ENCODE measurements at regions of chr10 and their contacts with region 1.

Region 1: GRCh38 chr10:119199231-119199992 is 8.0 kb upstream of the GRK5 start:
- DNase-seq: peak; percentile 89
- ATAC-seq: peak; percentile 85
- H3K4me3 ChIP-seq: no peak overlapping the region
- H3K27ac ChIP-seq: no peak overlapping the region
- H3K4me1 ChIP-seq: peaks cover 11% of the 10 kb centered on the region
- H3K27me3 ChIP-seq: no peaks in the 10 kb centered on the region
- CTCF ChIP-seq: peak; percentile 92
- POLR2A ChIP-seq: no peak; the same call in 1 of the 2 replicates
- RAD21 ChIP-seq: peak; percentile 95

Region 2: DNA sequence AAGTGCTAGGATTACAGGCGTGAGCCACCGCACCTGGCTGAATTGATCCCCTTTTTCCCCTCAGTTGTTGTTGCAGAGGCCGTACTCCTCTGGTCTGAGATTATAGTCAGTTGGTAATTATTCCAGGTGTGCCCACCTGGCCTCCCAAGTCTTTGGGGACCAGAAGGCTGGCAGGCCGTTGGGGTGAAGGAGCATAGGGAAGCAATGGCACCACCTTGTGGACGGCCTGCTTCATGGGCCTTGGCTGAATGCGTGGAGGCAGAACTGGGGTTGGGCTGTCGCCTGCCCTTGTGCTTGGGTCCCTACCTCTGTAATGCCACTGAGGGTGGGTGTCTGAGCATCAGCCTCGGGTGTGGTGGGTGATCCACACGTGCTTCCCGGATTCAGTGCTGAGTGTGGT is 217.4 kb after region 1 on chr10:
- CTCF ChIA-PET with region 1: interaction called, 8 read pairs
- POLR2A ChIA-PET with region 1: no interaction called
- dilution Hi-C with region 1: no loop called
- in situ Hi-C with region 1: no loop called
- intact Hi-C with region 1: loop called (anchors 2 kb)
- DNase-seq: peak; percentile 60
- ATAC-seq: no peak
- H3K4me3 ChIP-seq: no peak overlapping the region
- H3K27ac ChIP-seq: 0 out of 2 replicates have a peak overlapping the region, but pooled peaks have one; percentile 2
- H3K4me1 ChIP-seq: peaks cover 36% of the 10 kb centered on the region
- H3K27me3 ChIP-seq: no peaks in the 10 kb centered on the region
- CTCF ChIP-seq: peak; percentile 77
- POLR2A ChIP-seq: peak; percentile 49; the same call in 1 of the 2 replicates
- RAD21 ChIP-seq: peak; percentile 91

Region 3: DNA sequence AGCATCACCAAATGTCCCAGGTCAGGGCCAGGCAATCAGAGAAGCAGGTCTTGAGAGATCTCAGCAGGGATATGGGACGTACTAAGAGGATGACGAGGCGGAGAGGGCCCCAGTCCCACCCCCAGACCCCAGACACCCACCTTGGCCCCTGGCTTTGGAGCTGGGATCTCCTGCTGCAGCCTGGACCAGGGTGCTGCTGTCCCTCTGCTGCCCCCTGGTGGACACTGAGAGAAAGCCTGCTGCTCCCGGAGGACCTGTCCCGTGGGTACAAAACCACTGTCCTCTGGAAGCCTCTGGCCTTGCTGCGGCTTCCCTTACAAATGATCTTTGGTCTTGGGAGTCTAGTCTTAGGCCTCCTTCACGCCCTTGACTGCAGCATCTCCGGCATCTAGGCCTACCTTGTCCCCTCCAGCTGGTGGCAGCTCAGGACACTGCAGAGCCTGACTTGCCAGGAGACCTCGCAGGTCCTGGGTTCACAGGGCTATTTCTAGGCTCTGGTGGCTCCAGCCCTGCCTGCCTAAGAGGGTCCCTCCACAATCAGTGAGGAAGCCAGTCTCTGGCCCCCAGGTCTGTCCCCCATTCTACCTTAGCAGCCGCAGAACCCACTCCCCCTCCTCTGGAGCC is 246.0 kb after region 1 on chr10:
- CTCF ChIA-PET with region 1: interaction called, 31 read pairs
- POLR2A ChIA-PET with region 1: no interaction called
- dilution Hi-C with region 1: no loop called
- in situ Hi-C with region 1: loop called (anchors 5 kb)
- intact Hi-C with region 1: loop called (anchors 1 kb)
- DNase-seq: peak; percentile 74
- ATAC-seq: peak; percentile 74
- H3K4me3 ChIP-seq: no peak overlapping the region
- H3K27ac ChIP-seq: no peak overlapping the region
- H3K4me1 ChIP-seq: peaks cover 9% of the 10 kb centered on the region; the same call in 1 of the 2 replicates
- H3K27me3 ChIP-seq: no peaks in the 10 kb centered on the region
- CTCF ChIP-seq: peak; percentile 86
- POLR2A ChIP-seq: no peak
- RAD21 ChIP-seq: peak; percentile 86

Region 4: GRCh38 chr10:119494236-119495060 is 295.0 kb after region 1 on chr10:
- CTCF ChIA-PET with region 1: interaction called, 10 read pairs
- POLR2A ChIA-PET with region 1: no interaction called
- dilution Hi-C with region 1: no loop called
- in situ Hi-C with region 1: no loop called
- intact Hi-C with region 1: no loop called
- DNase-seq: peak; percentile 76
- ATAC-seq: peak; percentile 46
- H3K4me3 ChIP-seq: no peak overlapping the region
- H3K27ac ChIP-seq: peak overlapping the region; percentile 94
- H3K4me1 ChIP-seq: peaks cover 30% of the 10 kb centered on the region
- H3K27me3 ChIP-seq: no peaks in the 10 kb centered on the region
- CTCF ChIP-seq: no peak
- POLR2A ChIP-seq: no peak
- RAD21 ChIP-seq: no peak

Region 5: DNA sequence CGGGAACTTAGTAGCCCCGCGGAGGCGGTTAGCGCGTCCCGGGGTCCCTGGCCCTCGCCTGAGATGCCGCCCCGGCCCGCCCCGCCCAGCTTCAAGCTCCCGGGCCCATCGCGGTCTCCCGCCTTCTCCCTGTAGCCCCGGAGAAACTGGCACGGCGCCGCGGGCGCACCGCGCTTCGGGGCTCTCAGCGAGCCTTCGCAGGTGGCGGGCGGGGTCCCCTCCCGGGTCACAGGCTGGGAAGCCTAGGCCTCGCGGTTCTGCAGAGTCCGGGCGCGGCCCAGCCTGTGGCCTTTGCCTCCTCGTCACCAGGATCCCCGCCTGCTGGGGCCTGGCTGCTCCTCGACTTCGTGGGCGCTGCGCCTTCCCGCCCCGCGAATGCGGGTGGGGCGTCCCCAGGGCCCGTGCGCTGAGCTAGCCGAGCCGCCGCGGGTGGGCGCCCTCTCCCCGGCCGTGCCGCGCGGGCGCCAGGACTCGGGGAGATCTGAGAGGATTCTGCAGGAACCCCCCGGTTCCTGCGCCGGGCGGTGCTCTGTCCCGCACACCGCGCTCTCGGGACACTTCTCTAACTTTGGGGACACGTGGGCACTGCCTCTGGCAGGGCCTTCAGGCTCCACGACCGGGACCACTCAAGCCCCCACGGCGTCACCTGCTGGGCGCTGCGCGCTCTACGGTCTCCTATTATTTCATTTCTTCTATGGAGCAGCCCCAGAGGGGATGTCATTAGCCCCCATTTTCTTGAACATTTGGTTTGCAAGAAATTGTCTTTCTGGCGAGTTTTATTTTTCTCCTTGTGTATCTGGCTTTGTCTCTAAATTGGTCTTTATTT is 343.8 kb after region 1 on chr10:
- CTCF ChIA-PET with region 1: interaction called, 8 read pairs
- POLR2A ChIA-PET with region 1: no interaction called
- dilution Hi-C with region 1: no loop called
- in situ Hi-C with region 1: no loop called
- intact Hi-C with region 1: loop called (anchors 1 kb)
- DNase-seq: peak; percentile 49
- ATAC-seq: peak; percentile 58
- H3K4me3 ChIP-seq: peak overlapping the region; percentile 81
- H3K27ac ChIP-seq: peak overlapping the region; percentile 43
- H3K4me1 ChIP-seq: peaks cover 20% of the 10 kb centered on the region
- H3K27me3 ChIP-seq: no peaks in the 10 kb centered on the region; the same call in 1 of the 2 replicates
- CTCF ChIP-seq: peak; percentile 56
- POLR2A ChIP-seq: no peak; the same call in 1 of the 2 replicates
- RAD21 ChIP-seq: peak; percentile 54

Region 6: GRCh38 chr10:119596537-119597404 is 397.4 kb after region 1 on chr10 and contains the start of gene TIAL1:
- CTCF ChIA-PET with region 1: interaction called, 8 read pairs
- POLR2A ChIA-PET with region 1: no interaction called
- dilution Hi-C with region 1: no loop called
- in situ Hi-C with region 1: no loop called
- intact Hi-C with region 1: loop called (anchors 2 kb)
- DNase-seq: peak; percentile 99
- ATAC-seq: peak; percentile 87
- H3K4me3 ChIP-seq: peak within 1 kb of the TSS; percentile 78
- H3K27ac ChIP-seq: peak within 1 kb of the TSS; percentile 96
- H3K4me1 ChIP-seq: peaks cover 5% of the 10 kb centered on the region; the same call in 1 of the 2 replicates
- H3K27me3 ChIP-seq: no peaks in the 10 kb centered on the region
- CTCF ChIP-seq: no peak
- POLR2A ChIP-seq: peak; percentile 71
- RAD21 ChIP-seq: no peak
- total RNA-seq, gene TIAL1: 28.0 and 44.2 TPM in 2 replicates

Region 7: GRCh38 chr10:119650692-119651513 is 451.5 kb after region 1 on chr10 and contains the start of gene BAG3:
- CTCF ChIA-PET with region 1: interaction called, 3 read pairs
- POLR2A ChIA-PET with region 1: no interaction called
- dilution Hi-C with region 1: no loop called
- in situ Hi-C with region 1: no loop called
- intact Hi-C with region 1: loop called (anchors 5 kb)
- DNase-seq: peak; percentile 92
- ATAC-seq: peak; percentile 87
- H3K4me3 ChIP-seq: peak within 1 kb of the TSS; percentile 71
- H3K27ac ChIP-seq: peak within 1 kb of the TSS; percentile 89
- H3K4me1 ChIP-seq: peaks cover 11% of the 10 kb centered on the region
- H3K27me3 ChIP-seq: no peaks in the 10 kb centered on the region
- CTCF ChIP-seq: no peak
- POLR2A ChIP-seq: peak; percentile 97
- RAD21 ChIP-seq: no peak
- total RNA-seq, gene BAG3: 5.4 and 5.8 TPM in 2 replicates

Measured in IMR-90 (cell line).